H1 (cell line): ENCODE measurements at regions of chr3 and their contacts with region 1.

Region 1: GRCh38 chr3:170397579-170398177 is 21.0 kb upstream of the CLDN11 start:
- DNase-seq: no peak
- H3K4me3 ChIP-seq: no peak overlapping the region
- H3K27ac ChIP-seq: no peak overlapping the region
- H3K4me1 ChIP-seq: no peaks in the 10 kb centered on the region
- H3K27me3 ChIP-seq: no peaks in the 10 kb centered on the region
- CTCF ChIP-seq: no peak
- EP300 ChIP-seq: no peak
- POLR2A ChIP-seq: no peak
- RAD21 ChIP-seq: no peak

Region 2: DNA sequence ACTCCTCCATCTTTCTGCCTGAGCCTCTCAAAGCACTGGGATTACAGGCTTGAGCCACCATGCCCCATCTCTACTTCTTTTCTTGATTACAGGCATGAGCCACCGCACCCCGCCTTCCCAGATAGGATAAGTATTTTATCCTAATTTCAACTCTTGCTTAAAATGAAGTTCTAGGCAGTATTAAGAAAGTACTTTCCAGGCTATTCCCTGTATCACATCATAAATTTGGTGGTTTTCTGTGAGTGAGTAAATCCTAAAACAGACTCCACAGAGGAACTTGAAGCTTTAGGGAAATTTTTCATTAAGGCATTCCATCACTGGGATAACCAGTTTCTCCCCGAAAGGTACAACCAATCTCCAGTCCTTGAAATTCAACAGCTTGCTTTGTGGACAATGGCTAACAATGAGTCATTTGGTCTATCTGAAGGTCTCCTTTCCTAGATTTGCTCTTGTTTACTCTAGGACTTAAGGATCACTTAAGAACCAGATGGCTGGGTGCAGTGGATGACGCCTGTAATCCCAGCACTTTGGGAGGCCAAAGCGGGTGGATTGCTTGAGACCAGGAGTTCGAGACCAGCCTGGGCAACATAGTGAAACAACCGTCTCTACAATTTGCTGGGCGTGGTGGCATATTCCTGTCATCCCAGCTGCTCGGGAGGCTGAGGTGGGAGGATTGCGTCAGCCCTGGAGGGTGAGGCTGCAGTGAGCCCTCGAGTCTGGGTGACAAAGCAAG is 89.8 kb before region 1 on chr3:
- CTCF ChIA-PET with region 1: interaction called, 12 read pairs
- POLR2A ChIA-PET with region 1: interaction called, 3 read pairs
- DNase-seq: no peak
- H3K4me3 ChIP-seq: no peak overlapping the region
- H3K27ac ChIP-seq: no peak overlapping the region
- H3K4me1 ChIP-seq: no peaks in the 10 kb centered on the region
- H3K27me3 ChIP-seq: no peaks in the 10 kb centered on the region
- CTCF ChIP-seq: no peak
- EP300 ChIP-seq: no peak
- POLR2A ChIP-seq: no peak
- RAD21 ChIP-seq: no peak

Region 3: DNA sequence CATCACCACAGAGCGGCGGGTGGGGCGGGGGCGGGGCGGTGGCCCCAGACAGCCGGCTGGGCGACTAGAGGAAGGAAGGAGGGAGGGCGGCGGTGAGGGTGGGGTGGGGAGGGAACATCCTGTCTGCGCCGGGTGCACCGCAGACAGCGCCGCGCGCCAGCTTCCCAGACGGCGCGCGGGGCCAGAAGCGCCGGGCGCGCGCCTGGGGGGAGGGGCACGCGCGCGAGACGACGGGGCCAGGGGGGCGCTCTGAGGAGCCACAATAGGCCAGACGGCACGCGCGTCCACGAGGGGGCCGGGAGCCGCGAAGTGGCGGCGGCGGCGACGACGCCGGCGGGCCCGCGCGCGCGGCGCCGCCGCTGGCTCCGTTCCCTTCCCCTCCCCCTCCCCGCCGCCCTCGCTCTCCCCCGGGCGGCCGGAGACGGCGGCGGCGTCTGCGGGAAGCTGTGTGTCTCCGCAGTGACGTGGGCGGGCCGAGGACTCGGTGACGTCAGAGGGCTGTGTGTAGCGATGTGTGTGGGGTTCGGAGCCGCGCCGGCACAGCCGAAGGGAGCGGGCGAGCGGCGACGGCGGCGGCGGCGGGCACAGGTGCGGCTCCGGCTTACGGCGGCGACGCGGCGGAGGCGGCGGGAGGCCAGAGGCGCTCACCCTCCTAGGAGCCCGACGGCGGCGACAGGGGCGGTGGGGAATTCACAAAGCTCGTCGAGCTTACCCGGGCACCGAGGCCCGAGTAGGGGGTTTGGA is 40.3 kb before region 1 on chr3 and contains the start of gene SKIL:
- CTCF ChIA-PET with region 1: interaction called, 3 read pairs
- POLR2A ChIA-PET with region 1: interaction called, 10 read pairs
- DNase-seq: peak in 1 of 2 experiments; percentile 91
- H3K4me3 ChIP-seq: peak within 1 kb of the TSS; percentile 54 to 95 (median 80)
- H3K27ac ChIP-seq: peak within 1 kb of the TSS; percentile 63; the same call in 1 of the 2 replicates
- H3K4me1 ChIP-seq: peaks cover 2 to 21% (median 9%) of the 10 kb centered on the region in 4 experiments; a peak in 5 of 7 replicates
- H3K27me3 ChIP-seq: no peaks in the 10 kb centered on the region
- CTCF ChIP-seq: no peak
- EP300 ChIP-seq: peak in 1 of 2 experiments; percentile 3; a peak in 1 of 3 replicates
- POLR2A ChIP-seq: peak in 1 of 2 experiments; percentile 61; a peak in 1 of 3 replicates
- RAD21 ChIP-seq: no peak
- total RNA-seq, gene SKIL: 266 and 277 TPM in 2 replicates